PC-9 (cell line): ENCODE measurements at regions of chr12 and their contacts with region 1.

Region 1: DNA sequence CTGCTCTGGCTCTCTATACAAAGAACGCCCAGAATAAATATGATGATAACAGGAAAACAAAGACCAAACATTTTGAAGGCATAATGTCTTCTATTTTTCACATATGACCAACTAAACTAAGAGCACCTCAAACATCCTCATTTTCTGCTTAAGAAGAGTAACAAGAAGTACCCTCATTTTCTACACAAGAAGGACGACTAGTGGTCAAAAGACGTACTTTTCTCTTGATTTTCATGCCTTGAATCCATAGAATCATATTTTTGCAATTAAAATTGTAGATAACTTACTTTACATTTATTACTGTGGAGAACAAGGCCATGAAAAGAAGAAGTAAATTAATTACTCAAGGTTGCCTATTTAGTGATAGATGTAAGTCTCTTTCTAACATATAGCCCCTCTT is 358.6 kb downstream of the DUSP6 start:
- DNase-seq: peak in 1 of 2 experiments; percentile 41
- H3K4me3 ChIP-seq: no peak overlapping the region
- H3K27ac ChIP-seq: no peak overlapping the region
- H3K4me1 ChIP-seq: no peaks in the 10 kb centered on the region
- H3K27me3 ChIP-seq: no peaks in the 10 kb centered on the region
- CTCF ChIP-seq: peak; percentile 76

Region 2: DNA sequence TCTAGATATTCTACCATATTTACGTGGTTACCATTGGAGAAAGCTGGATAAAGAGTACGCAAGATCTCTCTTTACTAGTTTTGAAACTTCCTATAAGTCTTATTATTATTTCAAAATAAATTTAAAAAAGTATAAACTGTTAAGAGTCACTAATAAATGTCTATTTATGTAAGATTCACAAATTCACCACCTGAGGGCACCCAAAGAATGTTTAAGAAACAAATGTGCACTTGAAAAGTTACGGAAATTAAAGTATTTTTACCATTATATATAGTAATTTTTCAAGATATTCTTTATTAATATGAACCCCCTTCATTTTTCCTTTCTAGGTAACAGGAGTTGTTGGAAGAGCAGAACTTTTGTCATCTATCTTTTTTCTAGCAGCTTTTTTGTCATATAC is 839.7 kb before region 1 on chr12:
- CTCF ChIA-PET with region 1: no interaction called
- POLR2A ChIA-PET with region 1: no interaction called
- intact Hi-C with region 1: loop called (anchors 5 kb)
- DNase-seq: no peak
- H3K4me3 ChIP-seq: no peak overlapping the region
- H3K27ac ChIP-seq: no peak overlapping the region
- H3K4me1 ChIP-seq: no peaks in the 10 kb centered on the region
- H3K27me3 ChIP-seq: no peaks in the 10 kb centered on the region
- CTCF ChIP-seq: peak; percentile 69

Region 3: DNA sequence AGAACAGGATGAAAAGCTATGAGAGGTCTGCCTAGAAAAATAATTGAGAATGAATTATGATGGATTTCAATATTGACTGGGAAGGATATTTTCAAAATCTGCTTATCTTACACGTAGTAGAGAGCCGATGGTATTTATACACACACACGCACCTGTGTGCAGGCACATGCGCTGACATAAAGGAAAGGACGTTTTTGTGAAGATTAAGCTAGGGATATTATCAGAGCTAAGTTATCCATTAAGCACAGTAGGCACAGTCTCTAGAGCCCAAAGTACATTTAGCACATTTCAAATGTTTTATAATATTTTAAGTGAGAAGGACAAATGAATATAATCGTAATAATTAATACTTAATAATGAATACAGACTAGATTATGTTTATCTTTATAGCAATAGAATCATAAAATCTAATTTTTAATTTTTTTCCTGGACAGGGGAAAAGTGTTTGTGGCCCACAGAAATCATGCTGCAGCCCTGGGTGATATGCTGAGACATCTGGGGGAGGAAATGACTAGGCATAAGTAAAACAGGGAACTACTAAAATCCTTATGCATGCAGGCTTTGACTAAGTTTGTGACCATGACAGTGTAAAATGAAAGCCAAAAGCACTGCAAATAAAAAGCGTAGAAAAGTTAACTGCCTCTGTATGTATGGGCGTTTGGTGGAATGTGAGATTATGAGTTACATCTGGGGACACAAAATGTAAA is 559.5 kb before region 1 on chr12:
- CTCF ChIA-PET with region 1: no interaction called
- POLR2A ChIA-PET with region 1: no interaction called
- intact Hi-C with region 1: loop called (anchors 10 kb)
- DNase-seq: no peak
- H3K4me3 ChIP-seq: no peak overlapping the region
- H3K27ac ChIP-seq: no peak overlapping the region
- H3K4me1 ChIP-seq: no peaks in the 10 kb centered on the region
- H3K27me3 ChIP-seq: no peaks in the 10 kb centered on the region
- CTCF ChIP-seq: no peak

Region 4: GRCh38 chr12:88638966-88639760 is 354.5 kb before region 1 on chr12:
- CTCF ChIA-PET with region 1: no interaction called
- POLR2A ChIA-PET with region 1: no interaction called
- intact Hi-C with region 1: loop called (anchors 10 kb)
- DNase-seq: no peak
- H3K4me3 ChIP-seq: no peak overlapping the region
- H3K27ac ChIP-seq: no peak overlapping the region
- H3K4me1 ChIP-seq: no peaks in the 10 kb centered on the region
- H3K27me3 ChIP-seq: no peaks in the 10 kb centered on the region
- CTCF ChIP-seq: no peak

Region 5: GRCh38 chr12:88922816-88923215 is 70.8 kb before region 1 on chr12:
- CTCF ChIA-PET with region 1: no interaction called
- POLR2A ChIA-PET with region 1: no interaction called
- intact Hi-C with region 1: loop called (anchors 10 kb)
- DNase-seq: no peak
- H3K4me3 ChIP-seq: no peak overlapping the region
- H3K27ac ChIP-seq: no peak overlapping the region
- H3K4me1 ChIP-seq: peaks cover 26% of the 10 kb centered on the region
- H3K27me3 ChIP-seq: no peaks in the 10 kb centered on the region
- CTCF ChIP-seq: no peak

Region 6: DNA sequence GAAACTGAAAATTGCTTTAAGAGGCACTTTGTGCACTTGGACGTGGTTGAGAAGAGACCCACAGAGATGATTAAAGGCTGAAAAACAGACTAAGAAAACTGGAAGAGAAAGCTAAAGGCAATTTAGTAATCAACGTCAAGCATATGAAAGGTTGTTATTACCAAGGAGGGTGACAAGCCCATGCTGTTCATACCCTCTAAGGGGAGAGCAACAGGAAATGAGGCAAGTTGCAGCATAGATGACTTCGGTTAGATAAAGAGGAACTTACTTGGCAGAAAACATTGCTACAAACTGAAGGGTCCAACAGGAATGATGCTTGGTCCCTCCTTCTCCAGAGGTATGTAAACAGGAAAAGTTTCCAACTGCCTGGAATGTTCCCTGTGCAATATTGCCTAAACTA is 250.9 kb after region 1 on chr12:
- CTCF ChIA-PET with region 1: no interaction called
- POLR2A ChIA-PET with region 1: no interaction called
- intact Hi-C with region 1: no loop called
- DNase-seq: no peak
- H3K4me3 ChIP-seq: no peak overlapping the region
- H3K27ac ChIP-seq: no peak overlapping the region
- H3K4me1 ChIP-seq: peaks cover 7% of the 10 kb centered on the region; the same call in 1 of the 2 replicates
- H3K27me3 ChIP-seq: no peaks in the 10 kb centered on the region
- CTCF ChIP-seq: no peak